Heart right ventricle (tissue), 16 donors: ENCODE measurements at regions of chr20 and their contacts with region 1.

Region 1: DNA sequence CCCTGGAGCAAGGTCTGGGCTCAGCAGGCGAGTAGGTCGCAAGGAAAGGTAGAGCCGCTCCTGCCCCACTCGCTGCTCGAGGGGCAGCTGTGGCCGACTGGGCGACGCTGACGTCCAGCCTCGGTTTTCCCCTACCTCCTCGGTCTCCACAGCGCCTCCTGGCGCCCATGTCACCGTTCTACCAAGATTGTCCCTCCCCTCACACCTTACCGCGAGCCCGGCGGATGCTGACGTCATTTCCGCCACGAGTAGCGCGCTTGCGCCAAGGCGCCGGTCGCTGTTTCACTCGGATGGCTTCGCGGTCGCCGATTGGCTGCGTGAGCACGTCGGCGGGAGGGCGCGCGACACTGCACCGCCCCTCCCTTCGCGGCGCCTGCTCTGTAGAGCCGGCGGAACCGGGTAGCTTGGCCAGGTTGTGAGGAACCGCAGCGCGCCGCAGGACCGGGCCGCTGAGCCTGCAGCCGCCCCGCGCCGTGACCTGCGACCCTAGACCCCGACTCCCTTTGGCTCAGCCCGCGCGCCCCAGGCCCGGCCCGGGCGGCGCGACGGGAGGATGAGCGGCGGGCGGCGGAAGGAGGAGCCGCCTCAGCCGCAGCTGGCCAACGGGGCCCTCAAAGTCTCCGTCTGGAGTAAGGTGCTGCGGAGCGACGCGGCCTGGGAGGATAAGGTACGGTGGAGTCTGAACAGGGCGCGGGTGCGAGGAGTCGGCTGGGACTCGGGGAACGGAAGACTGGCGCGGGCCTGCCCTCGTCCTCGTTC is at the start of gene RAB5IF:
- DNase-seq: peak; percentile 99 to 100
- ATAC-seq: peak; percentile 98 to 99 (median 98)
- H3K4me3 ChIP-seq: peak within 1 kb of the TSS; percentile 63 to 100 (median 97)
- H3K27ac ChIP-seq: peak within 1 kb of the TSS; percentile 67 to 97 (median 89)
- H3K4me1 ChIP-seq: peaks cover 9 to 45% (median 20%) of the 10 kb centered on the region in 9 donors
- H3K27me3 ChIP-seq: no peaks in the 10 kb centered on the region
- CTCF ChIP-seq: peak; percentile 80 to 99 (median 94)
- total RNA-seq, gene RAB5IF: 42.8 to 73.7 (median 49.2) TPM

Region 2: DNA sequence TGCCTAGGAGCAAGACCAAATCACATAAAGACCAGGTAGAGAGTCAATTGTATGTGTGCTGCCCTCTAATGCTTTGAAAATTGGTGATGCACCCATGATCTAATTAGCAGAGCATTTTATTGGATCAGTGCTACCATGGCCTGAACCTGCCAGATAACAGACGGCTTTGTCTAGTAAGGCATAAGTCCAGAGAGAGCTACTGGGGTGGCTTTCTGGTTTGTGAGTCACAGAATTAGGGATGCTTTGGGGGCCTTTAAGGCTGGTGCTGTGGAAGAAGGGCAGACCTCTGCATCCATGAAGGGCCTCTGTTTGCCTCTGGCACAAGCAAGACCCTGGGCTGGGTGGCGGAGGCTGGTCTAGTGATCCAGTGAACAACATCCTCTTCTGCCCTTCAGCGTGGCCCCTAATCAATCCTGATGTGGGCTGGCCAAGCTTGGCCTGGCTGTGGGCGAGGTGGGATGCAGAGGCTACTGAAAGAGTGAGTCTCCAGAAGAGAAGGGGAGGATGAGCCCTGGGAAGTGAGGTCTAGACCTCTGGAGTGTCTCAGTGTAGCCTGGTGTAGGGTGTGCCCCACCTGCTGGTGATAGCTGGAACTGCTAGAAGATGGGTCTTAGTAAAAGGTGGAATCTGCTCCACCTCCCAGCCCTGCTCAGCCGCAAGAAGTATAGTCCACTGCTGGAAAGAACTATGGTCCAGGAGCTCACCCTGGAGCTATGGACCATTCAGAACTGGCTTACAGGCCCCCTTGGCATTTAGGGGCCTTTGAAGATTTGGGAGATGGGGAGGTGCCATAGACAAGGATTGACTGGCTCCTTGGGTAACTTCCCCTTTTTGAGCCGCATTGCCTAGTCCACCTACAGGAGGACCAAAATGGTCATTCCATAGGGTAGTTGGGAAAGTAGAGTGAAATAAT is 406.0 kb before region 1 on chr20:
- intact Hi-C with region 1: loop called in 2 of 10 experiments (anchors 10 kb)
- DNase-seq: peak; percentile 65 to 81
- ATAC-seq: peak; percentile 57 to 83 (median 76)
- H3K4me3 ChIP-seq: no peak overlapping the region
- H3K27ac ChIP-seq: no peak overlapping the region
- H3K4me1 ChIP-seq: peaks cover 0 to 20% (median 0%) of the 10 kb centered on the region in 9 donors
- H3K27me3 ChIP-seq: no peaks in the 10 kb centered on the region
- CTCF ChIP-seq: peak; percentile 85 to 95 (median 92)

Region 3: GRCh38 chr20:36391456-36391855 is 214.1 kb before region 1 on chr20:
- intact Hi-C with region 1: no loop called
- DNase-seq: no peak
- ATAC-seq: no peak
- H3K4me3 ChIP-seq: no peak overlapping the region
- H3K27ac ChIP-seq: no peak overlapping the region
- H3K4me1 ChIP-seq: no peaks in the 10 kb centered on the region
- H3K27me3 ChIP-seq: peaks cover 0 to 27% (median 6%) of the 10 kb centered on the region in 7 donors
- CTCF ChIP-seq: no peak

Region 4: GRCh38 chr20:36460648-36461599 is 144.7 kb before region 1 on chr20:
- intact Hi-C with region 1: loop called in 2 of 10 experiments (anchors 10 kb)
- DNase-seq: peak; percentile 92 to 95
- ATAC-seq: peak; percentile 66 to 86 (median 78)
- H3K4me3 ChIP-seq: peak overlapping the region; percentile 22 to 98 (median 88)
- H3K27ac ChIP-seq: peak overlapping the region; percentile 97 to 100 (median 99)
- H3K4me1 ChIP-seq: peaks cover 11 to 42% (median 39%) of the 10 kb centered on the region in 9 donors
- H3K27me3 ChIP-seq: no peaks in the 10 kb centered on the region
- CTCF ChIP-seq: peak in 3 of 9 donors; percentile 19 to 37 (median 31)

Region 5: GRCh38 chr20:36573103-36573794 is 32.3 kb before region 1 on chr20 and contains the start of gene TGIF2:
- intact Hi-C with region 1: loop called in 1 of 10 experiments (anchors 5 kb)
- DNase-seq: peak; percentile 84 to 85
- ATAC-seq: peak; percentile 86 to 90 (median 88)
- H3K4me3 ChIP-seq: peak within 1 kb of the TSS; percentile 66 to 89 (median 84)
- H3K27ac ChIP-seq: peak within 1 kb of the TSS; percentile 11 to 91 (median 88)
- H3K4me1 ChIP-seq: peaks cover 8 to 40% (median 24%) of the 10 kb centered on the region in 9 donors
- H3K27me3 ChIP-seq: no peaks in the 10 kb centered on the region
- CTCF ChIP-seq: no peak
- total RNA-seq, gene TGIF2: 5.2 to 13.8 (median 7.2) TPM

Region 6: DNA sequence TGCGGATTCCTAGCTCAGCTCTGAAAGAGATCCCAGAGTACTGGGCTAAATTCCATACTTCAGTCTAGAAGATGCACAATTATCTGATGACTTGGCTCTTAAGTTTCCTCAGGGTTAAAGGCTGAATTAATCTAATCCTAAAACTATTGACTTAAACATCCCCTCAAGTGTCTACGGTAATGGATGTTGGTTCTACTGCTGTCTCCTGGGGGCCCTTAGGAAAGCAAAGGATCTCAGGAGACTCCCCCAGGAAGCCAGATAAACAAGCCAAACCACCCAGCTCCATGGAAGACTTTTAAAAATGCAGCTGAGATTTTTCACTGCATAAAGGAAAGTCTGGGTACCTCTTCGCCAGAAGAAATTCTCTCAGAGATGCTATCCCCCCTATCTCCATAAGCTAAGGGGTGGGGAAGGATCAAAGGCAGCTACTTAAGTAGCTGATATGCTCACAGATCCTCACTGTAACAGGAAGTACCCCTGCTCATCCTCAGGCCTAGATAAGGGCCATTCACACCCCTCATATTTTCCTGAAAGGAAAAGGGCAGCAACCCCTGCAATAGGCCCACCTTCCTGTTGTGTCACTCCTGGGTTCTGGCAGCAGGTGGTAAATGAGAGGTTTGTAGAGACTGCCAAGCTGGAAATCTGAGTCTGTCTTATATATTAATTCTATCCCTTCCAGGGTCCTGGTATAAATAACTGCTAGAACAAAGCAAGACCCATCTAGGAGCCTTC is 131.0 kb after region 1 on chr20:
- intact Hi-C with region 1: no loop called
- DNase-seq: no peak
- ATAC-seq: no peak
- H3K4me3 ChIP-seq: no peak overlapping the region
- H3K27ac ChIP-seq: peak overlapping the region in 1 of 10 donors; percentile 24
- H3K4me1 ChIP-seq: peaks cover 0 to 55% (median 21%) of the 10 kb centered on the region in 9 donors
- H3K27me3 ChIP-seq: no peaks in the 10 kb centered on the region
- CTCF ChIP-seq: no peak

Region 7: GRCh38 chr20:36773597-36774390 is 168.2 kb after region 1 on chr20 and contains the start of gene DSN1:
- intact Hi-C with region 1: loop called in 1 of 10 experiments (anchors 5 kb)
- DNase-seq: peak; percentile 98 to 100
- ATAC-seq: peak; percentile 96 to 99 (median 97)
- H3K4me3 ChIP-seq: peak within 1 kb of the TSS; percentile 49 to 85 (median 78)
- H3K27ac ChIP-seq: peak within 1 kb of the TSS; percentile 89 to 99 (median 94)
- H3K4me1 ChIP-seq: peaks cover 0 to 39% (median 25%) of the 10 kb centered on the region in 9 donors
- H3K27me3 ChIP-seq: no peaks in the 10 kb centered on the region
- CTCF ChIP-seq: peak in 1 of 9 donors; percentile 79
- total RNA-seq, gene DSN1: 3.2 to 6.0 (median 4.9) TPM

Region 8: GRCh38 chr20:36886859-36887751 is 281.5 kb after region 1 on chr20:
- intact Hi-C with region 1: loop called in 4 of 10 experiments (anchors 5 to 10 kb)
- DNase-seq: peak; percentile 83 to 84
- ATAC-seq: peak; percentile 72 to 91 (median 87)
- H3K4me3 ChIP-seq: peak overlapping the region in 1 of 10 donors; percentile 4
- H3K27ac ChIP-seq: peak overlapping the region in 2 of 10 donors; percentile 15 to 30
- H3K4me1 ChIP-seq: peaks cover 0 to 13% (median 11%) of the 10 kb centered on the region in 9 donors
- H3K27me3 ChIP-seq: no peaks in the 10 kb centered on the region
- CTCF ChIP-seq: peak; percentile 83 to 98 (median 96)